Kidney (tissue), 22 donors: ENCODE measurements at regions of chr1 and their contacts with region 1.

Region 1: GRCh38 chr1:8314346-8315280 is 3.3 kb upstream of the SLC45A1 start:
- DNase-seq: peak in 4 of 5 donors; percentile 88 to 92 (median 90)
- H3K4me3 ChIP-seq: no peak overlapping the region
- H3K27ac ChIP-seq: no peak overlapping the region
- H3K4me1 ChIP-seq: peaks cover 0 to 19% (median 12%) of the 10 kb centered on the region in 3 donors
- H3K27me3 ChIP-seq: no peaks in the 10 kb centered on the region
- CTCF ChIP-seq: peak; percentile 91

Region 2: GRCh38 chr1:7989762-7990428 is 324.7 kb before region 1 on chr1:
- intact Hi-C with region 1: loop called (anchors 10 kb)
- DNase-seq: no peak
- H3K4me3 ChIP-seq: no peak overlapping the region
- H3K27ac ChIP-seq: no peak overlapping the region
- H3K4me1 ChIP-seq: no peaks in the 10 kb centered on the region
- H3K27me3 ChIP-seq: no peaks in the 10 kb centered on the region
- CTCF ChIP-seq: no peak